GM10248 (cell line): ENCODE measurements at regions of chr5 and their contacts with region 1.

Region 1: GRCh38 chr5:140564196-140565023 is at the starts of genes APBB3 and SLC35A4:
- DNase-seq: peak; percentile 96
- CTCF ChIP-seq: no peak

Region 2: GRCh38 chr5:138911441-138911840 is 1653.0 kb before region 1 on chr5:
- CTCF ChIA-PET with region 1: no interaction called
- POLR2A ChIA-PET with region 1: no interaction called
- DNase-seq: no peak
- CTCF ChIP-seq: no peak

Region 3: GRCh38 chr5:140005145-140005591 is 559.2 kb before region 1 on chr5:
- CTCF ChIA-PET with region 1: no interaction called
- POLR2A ChIA-PET with region 1: no interaction called
- DNase-seq: peak; percentile 70
- CTCF ChIP-seq: no peak

Region 4: GRCh38 chr5:140547508-140548299 is 16.7 kb before region 1 on chr5 and contains the start of gene EIF4EBP3:
- CTCF ChIA-PET with region 1: interaction called, 15 read pairs
- POLR2A ChIA-PET with region 1: interaction called, 18 read pairs
- DNase-seq: peak; percentile 90
- CTCF ChIP-seq: no peak

Region 5: GRCh38 chr5:140575309-140575708 is 10.9 kb after region 1 on chr5:
- CTCF ChIA-PET with region 1: interaction called, 25 read pairs
- POLR2A ChIA-PET with region 1: no interaction called
- DNase-seq: no peak
- CTCF ChIP-seq: no peak